Heart right ventricle (tissue), 16 donors: ENCODE measurements at regions of chr19 and their contacts with region 1.

Region 1: DNA sequence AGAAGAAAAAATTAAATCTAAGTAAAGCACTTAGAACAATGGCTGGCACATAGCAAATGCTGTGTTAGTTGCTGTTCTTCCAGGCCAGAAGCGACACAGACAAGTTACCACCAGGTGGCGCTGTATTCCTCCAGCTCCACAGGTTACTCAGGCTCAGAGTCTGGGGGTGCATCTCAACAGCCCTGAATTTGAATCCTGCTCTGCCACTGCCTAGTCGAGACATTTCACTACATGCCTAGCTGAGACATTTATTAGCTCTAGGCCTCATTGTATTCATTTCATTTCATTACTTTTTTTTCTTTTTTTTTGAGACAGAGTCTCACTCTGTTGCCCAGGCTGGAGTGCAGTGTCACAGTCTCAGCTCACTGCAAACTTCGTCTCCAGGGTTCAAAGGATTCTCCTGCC is 16.4 kb upstream of the CYP2B6 start:
- DNase-seq: peak; percentile 39 to 54
- ATAC-seq: peak in 3 of 8 donors; percentile 51 to 75 (median 66)
- H3K4me3 ChIP-seq: no peak overlapping the region
- H3K27ac ChIP-seq: no peak overlapping the region
- H3K4me1 ChIP-seq: no peaks in the 10 kb centered on the region
- H3K27me3 ChIP-seq: peaks cover 0 to 46% (median 13%) of the 10 kb centered on the region in 7 donors
- CTCF ChIP-seq: peak; percentile 65 to 91 (median 83)

Region 2: GRCh38 chr19:40897962-40898361 is 76.7 kb before region 1 on chr19:
- intact Hi-C with region 1: no loop called
- DNase-seq: no peak
- ATAC-seq: no peak
- H3K4me3 ChIP-seq: no peak overlapping the region
- H3K27ac ChIP-seq: no peak overlapping the region
- H3K4me1 ChIP-seq: no peaks in the 10 kb centered on the region
- H3K27me3 ChIP-seq: peaks cover 0 to under 1% (median 0%) of the 10 kb centered on the region in 7 donors
- CTCF ChIP-seq: no peak

Region 3: GRCh38 chr19:41144403-41144802 is 169.8 kb after region 1 on chr19:
- intact Hi-C with region 1: loop called in 9 of 10 experiments (anchors 2 to 5 kb)
- DNase-seq: peak; percentile 69 to 73
- ATAC-seq: peak in 6 of 8 donors; percentile 65 to 82 (median 68)
- H3K4me3 ChIP-seq: no peak overlapping the region
- H3K27ac ChIP-seq: no peak overlapping the region
- H3K4me1 ChIP-seq: no peaks in the 10 kb centered on the region
- H3K27me3 ChIP-seq: peaks cover 0 to 31% (median 17%) of the 10 kb centered on the region in 7 donors
- CTCF ChIP-seq: peak; percentile 65 to 87 (median 77)

Region 4: DNA sequence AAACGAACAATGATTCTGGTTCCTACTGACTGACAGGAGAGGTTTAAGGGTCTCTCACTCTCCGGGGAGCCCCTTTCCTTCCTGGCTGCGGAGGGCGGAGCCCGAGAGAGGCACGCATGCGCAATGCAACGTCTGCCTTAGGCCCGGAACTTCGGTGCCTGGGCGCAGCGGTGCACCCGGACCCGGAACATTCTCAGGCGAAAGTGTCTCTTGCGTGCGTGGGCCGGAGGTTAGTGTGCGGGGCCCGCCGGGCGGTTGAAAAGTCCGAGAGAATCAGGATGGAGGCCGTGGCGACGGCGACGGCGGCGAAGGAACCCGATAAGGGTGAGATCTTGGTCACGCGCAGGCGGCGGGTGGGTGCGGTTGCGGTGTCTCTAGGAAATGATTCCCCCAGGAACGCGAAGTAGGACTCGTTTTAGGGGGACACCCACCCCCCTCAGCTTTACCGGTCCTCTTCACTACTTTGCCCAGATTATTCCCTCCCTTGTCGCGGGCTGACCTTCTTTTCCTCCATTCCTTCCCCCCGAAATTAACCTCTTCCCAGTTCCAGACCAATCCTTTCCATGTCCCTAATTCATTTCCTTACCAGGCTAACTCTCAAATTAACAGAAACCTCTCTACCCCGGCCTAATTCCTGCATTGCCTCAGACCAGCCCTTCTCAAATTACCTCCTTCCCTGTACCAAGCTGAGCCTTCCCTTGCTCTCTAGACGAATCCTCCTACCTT is 335.6 kb after region 1 on chr19 and contains the start of gene CCDC97:
- intact Hi-C with region 1: loop called in 1 of 10 experiments (anchors 5 kb)
- DNase-seq: peak; percentile 88 to 89
- ATAC-seq: peak; percentile 82 to 93 (median 87)
- H3K4me3 ChIP-seq: peak within 1 kb of the TSS; percentile 15 to 84 (median 70)
- H3K27ac ChIP-seq: peak within 1 kb of the TSS; percentile 89 to 99 (median 94)
- H3K4me1 ChIP-seq: peaks cover 6 to 64% (median 39%) of the 10 kb centered on the region in 9 donors
- H3K27me3 ChIP-seq: no peaks in the 10 kb centered on the region
- CTCF ChIP-seq: peak in 2 of 9 donors; percentile 8 to 14
- total RNA-seq, gene CCDC97: 12.6 to 19.2 (median 16.4) TPM